Transverse colon (tissue), 4 donors: ENCODE measurements at regions of chr1 and their contacts with region 1.

Region 1: DNA sequence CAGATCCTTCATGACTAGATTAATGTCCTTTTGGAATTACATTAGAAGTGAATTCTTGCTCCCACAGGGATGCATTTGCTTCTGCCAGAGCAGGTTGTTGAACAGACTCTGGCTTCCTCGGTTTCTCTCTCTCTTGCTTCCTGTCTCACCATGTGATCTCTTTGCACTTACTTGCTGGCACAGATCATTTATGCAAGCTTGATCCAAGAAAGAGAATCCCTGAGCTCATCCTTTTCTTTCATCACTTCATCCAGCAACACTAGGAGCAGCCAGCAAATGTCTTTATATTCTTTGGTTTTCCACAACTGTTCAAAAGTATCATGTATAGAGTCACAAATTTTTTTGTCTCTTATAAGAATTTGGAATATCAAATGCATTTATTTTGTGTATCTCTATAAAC is 313.5 kb downstream of the ZNF326 start:
- DNase-seq: no peak
- H3K4me3 ChIP-seq: no peak overlapping the region
- H3K27ac ChIP-seq: no peak overlapping the region
- H3K4me1 ChIP-seq: no peaks in the 10 kb centered on the region
- H3K27me3 ChIP-seq: no peaks in the 10 kb centered on the region
- CTCF ChIP-seq: no peak
- EP300 ChIP-seq: no peak
- POLR2A ChIP-seq: no peak

Region 2: DNA sequence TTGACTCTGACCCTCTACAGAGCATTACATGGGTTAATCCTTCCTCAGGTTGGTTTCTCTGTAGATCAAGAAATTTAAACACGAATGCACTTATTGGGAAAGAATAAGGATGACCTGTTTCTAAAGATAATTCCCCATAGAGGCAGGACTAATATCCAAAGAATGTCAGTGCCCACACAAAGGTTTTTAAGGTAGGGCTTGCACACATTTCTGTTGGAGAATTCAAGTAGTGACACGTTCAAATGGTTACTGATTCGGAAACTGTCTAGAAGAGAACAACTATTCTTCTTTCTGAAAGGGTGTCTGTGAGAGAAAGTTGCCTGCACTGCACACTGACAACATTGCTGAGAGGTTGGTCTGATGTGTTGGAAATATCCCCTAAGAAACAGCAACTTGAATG is 146.2 kb before region 1 on chr1:
- in situ Hi-C with region 1: no loop called
- intact Hi-C with region 1: no loop called
- DNase-seq: no peak
- H3K4me3 ChIP-seq: no peak overlapping the region
- H3K27ac ChIP-seq: no peak overlapping the region
- H3K4me1 ChIP-seq: no peaks in the 10 kb centered on the region
- H3K27me3 ChIP-seq: no peaks in the 10 kb centered on the region
- CTCF ChIP-seq: no peak
- EP300 ChIP-seq: no peak
- POLR2A ChIP-seq: no peak

Region 3: DNA sequence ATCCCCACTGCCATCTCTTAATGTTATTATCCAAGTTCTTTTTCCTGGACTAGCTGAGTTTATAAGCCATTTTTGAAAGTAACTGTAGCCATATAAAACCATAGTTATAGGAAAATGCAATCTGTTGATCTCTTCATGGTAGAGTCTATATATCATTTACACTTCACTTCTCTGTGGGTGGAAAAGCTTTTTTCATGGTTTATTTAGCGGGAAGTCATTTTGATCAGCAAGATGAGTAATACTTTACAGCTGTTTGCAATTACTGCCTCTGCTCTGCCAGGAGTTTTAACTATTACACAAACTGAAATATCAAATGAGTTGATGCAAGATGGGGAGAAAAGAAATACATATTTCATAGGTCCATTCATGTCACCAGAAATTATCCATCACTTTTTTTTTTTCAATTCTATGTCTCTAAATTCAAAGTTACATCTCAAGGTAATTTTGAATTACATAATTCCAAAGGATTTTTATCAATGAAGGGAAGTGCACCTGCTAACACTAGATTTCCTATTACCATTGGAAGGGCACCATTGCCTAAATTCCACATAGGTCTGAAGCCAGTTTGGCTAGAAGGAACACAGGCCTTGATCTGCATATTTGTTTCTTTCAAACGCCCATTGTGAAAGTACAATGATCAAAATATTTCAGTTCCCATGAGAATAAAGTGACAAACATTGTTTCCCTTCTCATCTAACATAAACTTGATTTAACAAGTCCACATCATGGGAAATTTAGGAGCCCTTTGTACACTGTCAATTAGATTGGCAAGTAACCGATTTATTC is 16.8 kb before region 1 on chr1:
- in situ Hi-C with region 1: no loop called
- intact Hi-C with region 1: loop called (anchors 2 kb)
- DNase-seq: no peak
- H3K4me3 ChIP-seq: no peak overlapping the region
- H3K27ac ChIP-seq: no peak overlapping the region
- H3K4me1 ChIP-seq: no peaks in the 10 kb centered on the region
- H3K27me3 ChIP-seq: no peaks in the 10 kb centered on the region
- CTCF ChIP-seq: no peak
- EP300 ChIP-seq: no peak
- POLR2A ChIP-seq: no peak